HEK293T (cell line): ENCODE measurements at regions of chr2 and their contacts with region 1.

Region 1: DNA sequence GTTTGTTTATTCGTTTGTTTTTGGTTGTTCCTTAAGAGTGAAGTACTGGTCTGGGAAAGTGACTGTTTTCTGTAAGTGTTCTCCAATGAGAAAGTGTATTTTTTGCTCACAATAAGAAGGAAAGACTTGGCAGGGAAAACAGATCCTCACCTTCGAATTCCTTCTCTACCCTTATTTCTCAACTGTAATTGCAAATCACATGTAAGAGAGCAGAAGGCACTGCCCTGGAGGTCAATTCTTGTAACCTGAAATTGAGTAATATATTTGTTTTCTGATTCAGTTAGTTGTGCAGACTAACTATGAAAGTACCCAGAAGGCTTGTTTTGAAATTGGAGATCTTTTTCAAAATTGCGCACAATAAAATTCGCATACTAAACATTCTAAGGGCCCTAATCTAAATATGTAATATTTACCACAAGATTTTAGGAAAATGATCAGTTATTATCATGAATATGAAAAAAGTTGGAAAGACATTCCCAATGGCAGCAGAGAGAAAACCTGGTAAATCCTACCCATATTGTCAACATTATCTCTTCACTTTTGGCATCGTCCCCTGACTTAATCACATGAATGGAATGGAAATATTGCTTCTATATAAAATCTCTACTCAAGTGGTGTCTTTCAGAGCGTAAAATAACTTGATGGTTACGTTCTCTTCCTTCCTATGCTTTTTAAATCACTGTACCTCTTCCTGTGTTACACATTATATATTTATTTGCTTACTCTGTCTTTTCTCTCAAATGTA is 24.1 kb downstream of the TFPI start:
- DNase-seq: no peak

Region 2: DNA sequence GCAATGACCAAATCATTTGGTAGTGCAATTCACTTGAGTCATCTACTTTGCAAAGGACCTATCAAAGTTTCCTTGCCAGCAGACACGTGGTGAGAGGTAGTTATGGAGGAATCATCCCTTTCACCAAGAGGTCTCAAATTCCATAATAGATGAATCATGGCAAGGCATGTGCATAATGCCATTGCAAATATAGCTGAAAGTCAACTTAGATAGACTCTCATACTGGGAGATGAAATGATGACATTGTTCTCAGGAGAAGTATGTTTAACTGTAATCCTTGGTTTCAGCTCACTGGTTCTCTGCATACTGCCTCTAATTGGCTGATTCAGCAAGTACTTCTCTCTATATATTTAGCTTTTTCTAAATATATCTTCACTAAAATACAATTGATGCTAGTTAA is 139.3 kb before region 1 on chr2:
- CTCF ChIA-PET with region 1: interaction called, 10 read pairs
- POLR2A ChIA-PET with region 1: no interaction called
- DNase-seq: no peak

Region 3: GRCh38 chr2:187509667-187510417 is 20.3 kb before region 1 on chr2:
- CTCF ChIA-PET with region 1: no interaction called
- POLR2A ChIA-PET with region 1: no interaction called
- DNase-seq: no peak

Region 4: DNA sequence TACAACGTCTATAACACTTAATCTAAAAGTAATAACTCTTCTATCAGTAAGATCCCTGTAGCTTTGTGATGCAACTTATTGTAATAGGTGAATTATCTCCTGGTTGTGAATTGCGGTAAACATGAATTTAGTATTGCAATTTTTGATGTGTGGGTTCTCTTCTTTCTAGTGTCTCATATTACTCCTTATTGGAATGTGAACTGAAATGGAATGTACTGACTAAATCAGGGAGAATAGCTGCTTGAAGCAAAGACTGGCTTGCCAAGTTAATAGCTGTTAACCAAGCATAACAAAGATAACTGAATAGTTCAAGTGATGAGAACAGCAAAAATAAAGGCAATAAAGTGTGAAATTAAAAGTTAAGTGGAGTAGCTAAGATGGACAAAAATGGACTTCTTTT is 84.6 kb after region 1 on chr2:
- CTCF ChIA-PET with region 1: no interaction called
- POLR2A ChIA-PET with region 1: no interaction called
- DNase-seq: no peak

Region 5: GRCh38 chr2:187710791-187711521 is 180.8 kb after region 1 on chr2:
- CTCF ChIA-PET with region 1: no interaction called
- POLR2A ChIA-PET with region 1: no interaction called
- DNase-seq: no peak